GM12878 (cell line): ENCODE measurements at regions of chr2 and their contacts with region 1.

Region 1: DNA sequence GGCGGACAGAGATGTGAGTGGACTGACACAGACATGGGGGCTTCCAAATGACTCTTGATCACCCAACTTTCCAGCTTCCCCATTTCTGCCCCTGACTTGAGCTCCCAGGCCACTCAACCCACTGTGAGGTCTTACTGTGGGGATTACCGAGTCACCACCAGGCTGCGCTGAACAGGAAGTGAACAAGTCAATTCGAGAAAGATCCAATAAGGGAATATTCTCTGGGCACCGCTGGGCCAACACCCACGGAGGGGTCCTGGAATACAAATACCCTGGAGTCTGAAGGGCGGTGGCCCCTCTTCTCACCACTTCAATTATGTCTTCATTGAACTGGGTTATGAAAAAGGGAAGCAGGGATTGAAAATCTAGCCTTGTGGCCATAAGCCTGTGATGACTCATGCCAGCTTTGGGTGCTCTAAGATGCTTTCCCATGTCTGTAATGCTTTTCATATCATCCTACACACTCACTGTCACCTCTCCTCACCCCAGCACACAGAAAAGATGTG is 37.7 kb downstream of the BCL11A start:
- DNase-seq: peak; percentile 90
- ATAC-seq: peak; percentile 94
- H3K4me3 ChIP-seq: 0 out of 2 replicates have a peak overlapping the region, but pooled peaks have one; percentile 1
- H3K27ac ChIP-seq: peak overlapping the region; percentile 87
- H3K4me1 ChIP-seq: peaks cover 77% of the 10 kb centered on the region
- H3K27me3 ChIP-seq: no peaks in the 10 kb centered on the region
- CTCF ChIP-seq: no peak; a peak in 1 of 6 replicates
- EP300 ChIP-seq: peak; percentile 39 to 53; a peak in 1 of 4 replicates
- POLR2A ChIP-seq: no peak
- RAD21 ChIP-seq: no peak

Region 2: DNA sequence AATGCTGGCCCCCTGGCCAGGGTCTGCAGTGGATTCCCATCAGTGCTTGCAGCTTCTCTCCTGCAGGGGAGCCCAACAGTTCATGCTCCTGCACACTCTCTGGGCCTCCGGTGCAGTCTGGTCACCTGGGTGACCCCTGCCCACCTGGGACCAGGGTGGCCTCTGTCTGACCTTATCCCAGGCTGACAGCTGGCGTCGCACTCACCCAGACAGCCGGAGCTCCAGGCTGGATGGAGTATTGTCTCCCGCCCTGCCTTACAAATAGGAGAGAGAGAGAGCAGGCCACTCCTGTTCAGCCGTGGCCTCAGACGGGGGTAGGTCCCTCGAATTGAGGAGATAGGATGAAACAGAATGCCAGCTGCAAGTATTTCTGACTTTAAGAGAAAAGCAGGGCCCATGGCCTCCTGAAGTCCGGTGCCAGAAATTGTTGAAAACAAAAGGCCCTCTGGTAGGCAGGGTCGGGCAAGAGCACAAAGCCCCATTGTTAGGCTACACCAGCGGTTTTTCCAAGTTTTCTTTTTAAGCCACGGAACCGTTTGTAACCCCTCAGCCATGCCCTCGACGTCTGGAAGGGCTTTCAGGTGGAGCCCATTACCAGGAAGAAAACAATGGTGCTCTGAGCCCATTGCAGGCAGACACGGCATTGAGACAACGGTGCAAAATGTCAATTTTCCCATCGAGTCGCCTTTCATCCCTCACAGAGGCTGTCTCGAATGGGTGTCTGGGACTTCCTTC is 220.7 kb before region 1 on chr2:
- CTCF ChIA-PET with region 1: no interaction called
- POLR2A ChIA-PET with region 1: no interaction called
- RAD21 ChIA-PET with region 1: no interaction called
- SMC1A ChIA-PET with region 1: no interaction called
- in situ Hi-C with region 1: no loop called
- intact Hi-C with region 1: no loop called
- DNase-seq: no peak
- ATAC-seq: no peak
- H3K4me3 ChIP-seq: no peak overlapping the region
- H3K27ac ChIP-seq: no peak overlapping the region
- H3K4me1 ChIP-seq: no peaks in the 10 kb centered on the region
- H3K27me3 ChIP-seq: no peaks in the 10 kb centered on the region; a peak in 1 of 4 replicates
- CTCF ChIP-seq: no peak
- EP300 ChIP-seq: no peak
- POLR2A ChIP-seq: no peak
- RAD21 ChIP-seq: no peak

Region 3: DNA sequence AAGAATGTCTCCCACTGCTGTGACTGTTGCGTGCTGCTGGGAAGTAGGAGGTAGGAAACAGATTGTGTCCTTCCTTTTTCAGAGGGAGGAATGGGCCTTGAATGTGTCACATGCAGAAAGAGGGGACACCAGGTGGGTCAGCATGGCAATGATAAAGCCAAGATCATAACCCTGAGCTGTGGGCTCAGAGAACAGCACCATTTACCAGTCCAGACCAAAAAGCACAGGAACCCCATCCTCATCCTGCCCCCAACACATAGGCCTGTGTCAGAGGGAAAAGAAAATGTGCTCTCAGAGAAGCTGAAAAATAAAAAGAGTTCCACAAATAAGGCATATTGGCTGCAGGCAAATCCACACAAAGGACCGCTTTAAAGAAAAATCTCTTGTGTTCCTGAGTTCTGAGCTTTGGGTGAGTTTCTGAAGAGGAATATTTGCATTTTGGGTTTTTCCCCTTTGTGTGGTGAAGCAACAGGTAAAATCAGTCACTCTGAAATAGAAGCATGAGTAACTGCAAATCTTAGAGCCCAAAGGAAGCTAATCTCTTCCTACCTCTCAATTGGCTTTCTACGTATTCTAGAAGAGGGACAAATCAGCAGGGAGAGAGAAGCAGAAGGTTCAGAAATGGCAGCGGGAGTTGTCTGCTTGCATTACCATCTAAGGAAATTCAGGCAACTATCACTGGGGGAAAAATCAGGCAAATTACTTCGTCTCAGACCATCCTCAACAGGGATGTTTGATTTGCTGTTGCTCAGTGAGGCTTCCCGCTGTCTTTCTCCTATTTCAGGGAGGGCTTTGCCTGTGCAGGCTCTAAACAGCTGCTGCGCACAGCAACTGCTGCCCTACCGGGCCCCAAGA is 69.1 kb before region 1 on chr2:
- CTCF ChIA-PET with region 1: interaction called, 4 read pairs
- POLR2A ChIA-PET with region 1: no interaction called
- RAD21 ChIA-PET with region 1: interaction called, 7 read pairs
- SMC1A ChIA-PET with region 1: interaction called, 6 read pairs
- in situ Hi-C with region 1: no loop called
- intact Hi-C with region 1: loop called (anchors 2 kb)
- DNase-seq: peak; percentile 86
- ATAC-seq: peak; percentile 91
- H3K4me3 ChIP-seq: peak overlapping the region; percentile 21; the same call in 1 of the 2 replicates
- H3K27ac ChIP-seq: peak overlapping the region; percentile 94
- H3K4me1 ChIP-seq: peaks cover 54% of the 10 kb centered on the region
- H3K27me3 ChIP-seq: no peaks in the 10 kb centered on the region
- CTCF ChIP-seq: no peak
- EP300 ChIP-seq: peak in 1 of 2 experiments; percentile 38; a peak in 1 of 4 replicates
- POLR2A ChIP-seq: 0 out of 2 replicates have a peak, but pooled peaks have one; percentile 17
- RAD21 ChIP-seq: no peak

Region 4: DNA sequence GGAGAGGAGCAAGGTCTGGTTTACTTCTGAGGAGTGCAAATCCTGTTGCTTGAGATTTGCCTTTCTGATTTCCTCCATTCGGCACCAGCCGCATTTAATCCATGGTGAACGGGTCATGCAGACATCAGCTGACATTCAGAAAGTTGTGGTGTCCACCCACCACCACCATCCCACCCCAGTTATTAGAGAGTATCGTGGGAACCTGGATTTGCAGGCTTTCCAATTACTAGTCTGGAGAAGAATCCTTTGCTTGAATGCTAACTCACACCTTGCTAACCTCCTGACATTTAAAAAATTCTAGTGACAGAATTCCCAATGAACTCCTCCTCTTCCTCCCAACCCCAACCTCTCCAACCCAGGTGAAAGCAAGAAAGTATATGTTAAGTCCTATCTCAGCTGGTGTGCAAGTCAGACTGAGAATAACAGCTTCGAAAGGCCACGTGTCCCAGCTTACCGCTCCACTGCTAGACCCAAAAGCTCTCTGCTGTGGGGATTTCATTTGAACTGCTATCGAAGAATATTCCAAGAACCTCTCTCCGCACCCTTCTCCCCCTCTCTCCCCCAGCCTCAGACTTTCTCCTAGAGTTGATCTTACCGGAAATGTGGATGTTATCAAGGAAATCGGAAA is 20.0 kb after region 1 on chr2:
- CTCF ChIA-PET with region 1: no interaction called
- POLR2A ChIA-PET with region 1: no interaction called
- RAD21 ChIA-PET with region 1: no interaction called
- SMC1A ChIA-PET with region 1: interaction called, 3 read pairs
- in situ Hi-C with region 1: no loop called
- intact Hi-C with region 1: loop called (anchors 2 kb)
- DNase-seq: no peak
- ATAC-seq: peak; percentile 76
- H3K4me3 ChIP-seq: peak overlapping the region; percentile 45
- H3K27ac ChIP-seq: peak overlapping the region; percentile 49
- H3K4me1 ChIP-seq: peaks cover 13% of the 10 kb centered on the region
- H3K27me3 ChIP-seq: peaks cover 0 to 3% of the 10 kb centered on the region in 2 experiments; a peak in 2 of 4 replicates
- CTCF ChIP-seq: no peak
- EP300 ChIP-seq: no peak
- POLR2A ChIP-seq: no peak
- RAD21 ChIP-seq: no peak

Region 5: DNA sequence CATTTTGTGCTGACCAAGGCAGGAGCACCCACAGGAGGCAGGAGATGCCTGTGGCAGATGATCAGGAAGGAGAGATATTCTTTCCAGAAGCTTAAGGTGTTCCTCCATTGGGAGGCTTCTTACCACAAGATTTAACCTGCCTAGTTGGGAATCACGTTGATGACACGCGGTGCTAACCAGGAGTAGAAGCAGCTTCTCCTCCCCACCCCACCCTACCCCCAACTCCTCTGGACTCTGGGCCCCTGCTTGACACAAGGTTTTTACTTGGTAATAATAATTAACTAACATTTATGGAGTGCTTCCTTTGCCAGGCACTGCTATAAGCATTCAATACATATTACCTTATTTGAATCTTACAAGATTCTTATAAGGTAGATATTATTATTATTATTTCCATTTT is 177.8 kb after region 1 on chr2:
- CTCF ChIA-PET with region 1: no interaction called
- POLR2A ChIA-PET with region 1: no interaction called
- RAD21 ChIA-PET with region 1: no interaction called
- SMC1A ChIA-PET with region 1: no interaction called
- in situ Hi-C with region 1: no loop called
- intact Hi-C with region 1: no loop called
- DNase-seq: no peak
- ATAC-seq: no peak
- H3K4me3 ChIP-seq: no peak overlapping the region
- H3K27ac ChIP-seq: no peak overlapping the region
- H3K4me1 ChIP-seq: no peaks in the 10 kb centered on the region
- H3K27me3 ChIP-seq: peaks cover 0 to 3% of the 10 kb centered on the region in 2 experiments; a peak in 1 of 4 replicates
- CTCF ChIP-seq: no peak
- EP300 ChIP-seq: no peak
- POLR2A ChIP-seq: no peak
- RAD21 ChIP-seq: no peak